K562 (cell line): ENCODE measurements at regions of chr18 and their contacts with region 1.

Region 1: DNA sequence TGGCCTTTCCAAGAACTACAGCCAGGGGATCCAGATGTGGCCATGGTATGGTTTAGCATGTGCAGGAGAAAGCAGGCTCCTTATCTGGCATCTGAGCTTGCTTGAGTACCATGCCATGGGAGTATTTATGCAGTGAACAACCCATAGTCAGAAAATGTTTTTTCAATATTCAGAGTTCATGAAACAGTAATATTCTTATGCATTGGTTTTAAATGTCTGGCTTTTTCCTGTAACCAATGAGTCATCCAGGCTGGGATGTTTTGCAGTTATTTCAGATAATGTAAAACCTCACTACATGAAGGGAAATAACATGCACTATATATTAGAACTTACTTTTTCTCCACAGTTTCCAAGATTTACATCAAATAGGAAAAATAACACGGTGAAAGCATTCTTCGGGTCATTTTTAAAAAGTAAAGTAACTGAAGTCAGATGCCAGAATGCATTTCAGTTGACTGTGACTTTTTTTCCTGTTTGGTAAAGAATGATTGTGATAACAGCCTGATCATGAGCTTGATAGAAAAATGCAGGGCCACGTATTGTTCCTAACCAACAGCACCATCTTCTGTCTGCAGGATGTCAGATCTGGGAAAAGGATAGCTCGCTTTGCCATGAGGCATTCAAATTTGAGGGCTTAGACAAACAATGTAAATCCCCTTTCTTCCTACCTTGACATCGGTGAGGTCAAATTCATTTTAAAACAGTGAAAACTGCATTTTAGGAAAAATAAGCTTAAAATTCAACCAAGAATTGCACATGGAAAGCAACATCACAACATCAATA is 152.8 kb downstream of the DSC3 start:
- DNase-seq: peak in 1 of 4 experiments; percentile 60
- ATAC-seq: peak; percentile 78
- H3K4me3 ChIP-seq: no peak overlapping the region
- H3K27ac ChIP-seq: no peak overlapping the region
- H3K4me1 ChIP-seq: no peaks in the 10 kb centered on the region
- H3K27me3 ChIP-seq: no peaks in the 10 kb centered on the region
- CTCF ChIP-seq: peak; percentile 47 to 64 (median 62); a peak in 5 of 6 replicates
- EP300 ChIP-seq: no peak
- POLR2A ChIP-seq: no peak
- RAD21 ChIP-seq: peak; percentile 82 to 83

Region 2: GRCh38 chr18:29874519-29875098 is 1015.1 kb before region 1 on chr18:
- CTCF ChIA-PET with region 1: no interaction called
- POLR2A ChIA-PET with region 1: no interaction called
- in situ Hi-C with region 1: no loop called
- intact Hi-C with region 1: loop called (anchors 2 kb)
- DNase-seq: peak; percentile 11 to 58 (median 16)
- ATAC-seq: 0 out of 3 replicates have a peak, but pooled peaks have one; percentile 46
- H3K4me3 ChIP-seq: no peak overlapping the region
- H3K27ac ChIP-seq: no peak overlapping the region
- H3K4me1 ChIP-seq: no peaks in the 10 kb centered on the region
- H3K27me3 ChIP-seq: no peaks in the 10 kb centered on the region
- CTCF ChIP-seq: peak in 2 of 3 experiments; percentile 43 to 60; a peak in 4 of 6 replicates
- EP300 ChIP-seq: no peak
- POLR2A ChIP-seq: no peak
- RAD21 ChIP-seq: peak; percentile 66 to 71

Region 3: DNA sequence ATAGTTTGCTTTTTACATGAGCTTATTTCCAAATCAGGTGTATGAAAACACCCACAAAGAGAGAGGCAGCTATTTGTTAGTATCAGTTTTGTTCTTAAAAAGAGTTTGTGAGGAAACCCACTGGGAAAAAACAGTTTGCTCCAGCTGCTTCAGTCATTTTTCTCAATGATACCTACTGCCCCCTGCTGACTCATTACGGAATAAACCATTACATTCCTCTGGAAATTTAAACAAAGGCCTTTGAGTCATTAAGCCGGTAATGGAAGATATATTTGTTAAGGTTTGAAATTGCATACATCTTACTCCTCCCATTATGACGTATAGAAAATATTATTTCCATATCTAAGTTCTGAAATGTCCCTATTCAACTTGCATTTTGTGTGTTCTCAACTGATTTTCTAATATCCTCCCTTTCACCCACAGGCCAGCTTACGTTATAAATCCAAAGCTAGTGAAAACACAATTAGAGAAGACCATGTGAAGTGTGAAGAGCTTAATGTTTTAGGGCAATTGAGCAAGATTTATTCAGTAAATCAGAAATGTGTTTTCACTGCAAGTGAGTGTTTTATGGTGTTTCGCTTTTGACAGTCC is 608.7 kb before region 1 on chr18:
- CTCF ChIA-PET with region 1: no interaction called
- POLR2A ChIA-PET with region 1: no interaction called
- in situ Hi-C with region 1: no loop called
- intact Hi-C with region 1: loop called (anchors 5 kb)
- DNase-seq: peak; percentile 4 to 65 (median 19)
- ATAC-seq: 0 out of 3 replicates have a peak, but pooled peaks have one; percentile 37
- H3K4me3 ChIP-seq: no peak overlapping the region
- H3K27ac ChIP-seq: no peak overlapping the region
- H3K4me1 ChIP-seq: no peaks in the 10 kb centered on the region
- H3K27me3 ChIP-seq: no peaks in the 10 kb centered on the region
- CTCF ChIP-seq: peak in 2 of 3 experiments; percentile 52 to 63; a peak in 4 of 6 replicates
- EP300 ChIP-seq: no peak
- POLR2A ChIP-seq: no peak
- RAD21 ChIP-seq: peak; percentile 29 to 44

Region 4: GRCh38 chr18:30361864-30362540 is 527.7 kb before region 1 on chr18:
- CTCF ChIA-PET with region 1: no interaction called
- POLR2A ChIA-PET with region 1: no interaction called
- in situ Hi-C with region 1: no loop called
- intact Hi-C with region 1: loop called (anchors 5 kb)
- DNase-seq: peak in 1 of 4 experiments; percentile 53
- ATAC-seq: peak; percentile 85
- H3K4me3 ChIP-seq: no peak overlapping the region
- H3K27ac ChIP-seq: no peak overlapping the region
- H3K4me1 ChIP-seq: peaks cover 0 to 9% of the 10 kb centered on the region in 2 experiments; a peak in 1 of 5 replicates
- H3K27me3 ChIP-seq: no peaks in the 10 kb centered on the region
- CTCF ChIP-seq: peak in 2 of 3 experiments; percentile 2 to 11; a peak in 1 of 6 replicates
- EP300 ChIP-seq: no peak
- POLR2A ChIP-seq: no peak
- RAD21 ChIP-seq: no peak